ENCODE measurements at regions of chr1 and their contacts with region 1.

Region 1: GRCh38 chr1:111592389-111593361 is 26.9 kb upstream of the RAP1A start:
- DNase-seq: peak; percentile 66 to 96 (median 88)
- ATAC-seq: peak; percentile 92
- H3K4me3 ChIP-seq: no peak overlapping the region
- H3K4me3 Mint-ChIP-seq: peak overlapping the region; percentile 49
- H3K27ac ChIP-seq: peak overlapping the region; percentile 43 to 64
- H3K27ac Mint-ChIP-seq: peak overlapping the region; percentile 79
- H3K4me1 ChIP-seq: peaks cover 54% of the 10 kb centered on the region
- H3K4me1 Mint-ChIP-seq: peaks cover 59% of the 10 kb centered on the region
- H3K27me3 ChIP-seq: no peaks in the 10 kb centered on the region
- H3K27me3 Mint-ChIP-seq: no peaks in the 10 kb centered on the region
- CTCF ChIP-seq: no peak

Region 2: DNA sequence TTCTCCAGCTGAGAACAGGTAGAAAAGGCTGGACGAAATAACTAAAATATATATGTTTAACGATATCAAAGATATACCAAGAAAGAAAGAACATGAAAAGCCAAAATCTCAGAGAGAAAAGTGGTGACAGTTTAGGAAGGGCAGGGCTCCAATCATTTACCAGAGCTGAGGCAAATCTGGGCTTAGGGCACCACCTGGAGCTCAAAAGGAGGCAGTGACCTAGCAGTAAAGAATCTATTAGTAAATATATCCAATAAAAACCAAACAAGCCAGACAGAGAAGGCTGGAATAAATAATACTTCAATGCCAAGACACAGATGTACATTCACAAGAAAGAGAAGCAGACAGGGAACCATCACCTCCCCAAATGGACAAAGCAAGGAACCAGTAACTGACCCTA is 258.5 kb before region 1 on chr1:
- CTCF ChIA-PET with region 1: no interaction called
- POLR2A ChIA-PET with region 1: no interaction called
- intact Hi-C with region 1: no loop called
- DNase-seq: peak; percentile 37 to 85 (median 52)
- ATAC-seq: peak; percentile 95
- H3K4me3 ChIP-seq: no peak overlapping the region
- H3K4me3 Mint-ChIP-seq: no peak overlapping the region
- H3K27ac ChIP-seq: no peak overlapping the region
- H3K27ac Mint-ChIP-seq: no peak overlapping the region
- H3K4me1 ChIP-seq: peaks cover 8% of the 10 kb centered on the region
- H3K4me1 Mint-ChIP-seq: peaks cover 6% of the 10 kb centered on the region
- H3K27me3 ChIP-seq: no peaks in the 10 kb centered on the region
- H3K27me3 Mint-ChIP-seq: no peaks in the 10 kb centered on the region
- CTCF ChIP-seq: peak; percentile 81

Region 3: GRCh38 chr1:111516005-111516535 is 76.6 kb before region 1 on chr1:
- CTCF ChIA-PET with region 1: no interaction called
- POLR2A ChIA-PET with region 1: interaction called, 13 read pairs
- intact Hi-C with region 1: no loop called
- DNase-seq: peak in 7 of 14 experiments; percentile 20 to 76 (median 45)
- ATAC-seq: peak; percentile 84
- H3K4me3 ChIP-seq: peak overlapping the region; percentile 58
- H3K4me3 Mint-ChIP-seq: peak overlapping the region; percentile 73
- H3K27ac ChIP-seq: no peak overlapping the region
- H3K27ac Mint-ChIP-seq: peak overlapping the region; percentile 66
- H3K4me1 ChIP-seq: peaks cover 68% of the 10 kb centered on the region
- H3K4me1 Mint-ChIP-seq: peaks cover 40% of the 10 kb centered on the region
- H3K27me3 ChIP-seq: no peaks in the 10 kb centered on the region
- H3K27me3 Mint-ChIP-seq: no peaks in the 10 kb centered on the region
- CTCF ChIP-seq: peak; percentile 50

Region 4: DNA sequence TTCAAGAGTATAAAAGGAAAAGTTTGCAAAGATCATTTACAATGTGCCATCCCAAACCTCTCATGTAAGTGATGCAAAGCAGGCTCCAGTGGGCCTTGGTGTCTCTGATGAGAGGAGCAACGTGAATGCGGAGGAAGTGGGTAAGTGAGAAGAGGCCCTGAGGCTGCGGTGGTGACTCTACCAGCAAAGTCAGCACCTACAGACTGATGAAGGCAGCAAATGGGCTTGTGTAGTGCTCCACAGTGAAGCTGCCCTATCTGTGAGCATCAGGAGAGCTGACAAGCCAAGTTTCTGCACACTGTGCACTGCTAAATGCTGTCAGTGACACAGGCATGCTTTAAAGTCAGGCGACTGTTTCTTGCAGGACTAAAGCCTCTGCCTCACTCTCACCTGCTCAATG is 11.3 kb after region 1 on chr1:
- CTCF ChIA-PET with region 1: interaction called, 7 read pairs
- POLR2A ChIA-PET with region 1: interaction called, 29 read pairs
- intact Hi-C with region 1: no loop called
- DNase-seq: peak; percentile 63 to 91 (median 76)
- ATAC-seq: peak; percentile 98
- H3K4me3 ChIP-seq: no peak overlapping the region
- H3K4me3 Mint-ChIP-seq: peak overlapping the region; percentile 37
- H3K27ac ChIP-seq: peak overlapping the region; percentile 30 to 63
- H3K27ac Mint-ChIP-seq: peak overlapping the region; percentile 84
- H3K4me1 ChIP-seq: peaks cover 74% of the 10 kb centered on the region
- H3K4me1 Mint-ChIP-seq: peaks cover 76% of the 10 kb centered on the region
- H3K27me3 ChIP-seq: no peaks in the 10 kb centered on the region
- H3K27me3 Mint-ChIP-seq: no peaks in the 10 kb centered on the region
- CTCF ChIP-seq: no peak

Region 5: DNA sequence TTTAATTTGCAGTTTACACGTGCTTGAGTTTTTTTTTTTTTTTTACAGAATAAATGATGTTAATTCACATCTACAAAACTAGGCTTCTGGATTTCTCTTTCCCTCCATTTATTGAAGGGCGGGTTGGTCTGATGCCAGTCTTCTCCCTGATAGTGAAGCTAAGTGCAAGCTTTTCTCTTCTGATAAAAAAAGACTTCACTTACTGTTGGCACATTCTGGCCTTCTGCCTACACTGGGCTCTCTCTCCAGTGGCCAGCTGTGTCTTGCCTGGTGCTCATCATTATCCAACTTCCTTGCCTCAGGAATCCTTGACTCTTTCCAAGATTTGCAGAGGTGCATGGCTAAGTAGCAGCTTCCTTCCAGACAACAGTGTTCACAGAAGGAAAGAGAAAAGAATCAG is 19.3 kb after region 1 on chr1:
- CTCF ChIA-PET with region 1: interaction called, 5 read pairs
- POLR2A ChIA-PET with region 1: interaction called, 23 read pairs
- intact Hi-C with region 1: no loop called
- DNase-seq: no peak
- ATAC-seq: no peak
- H3K4me3 ChIP-seq: no peak overlapping the region
- H3K4me3 Mint-ChIP-seq: no peak overlapping the region
- H3K27ac ChIP-seq: no peak overlapping the region
- H3K27ac Mint-ChIP-seq: no peak overlapping the region
- H3K4me1 ChIP-seq: peaks cover 20% of the 10 kb centered on the region
- H3K4me1 Mint-ChIP-seq: peaks cover 29% of the 10 kb centered on the region
- H3K27me3 ChIP-seq: no peaks in the 10 kb centered on the region
- H3K27me3 Mint-ChIP-seq: no peaks in the 10 kb centered on the region
- CTCF ChIP-seq: no peak

Region 6: GRCh38 chr1:111648806-111649205 is 56.1 kb after region 1 on chr1:
- CTCF ChIA-PET with region 1: interaction called, 4 read pairs
- POLR2A ChIA-PET with region 1: no interaction called
- intact Hi-C with region 1: loop called in 1 of 2 experiments (anchors 10 kb)
- DNase-seq: no peak
- ATAC-seq: no peak
- H3K4me3 ChIP-seq: no peak overlapping the region
- H3K4me3 Mint-ChIP-seq: no peak overlapping the region
- H3K27ac ChIP-seq: no peak overlapping the region
- H3K27ac Mint-ChIP-seq: peak overlapping the region; percentile 79
- H3K4me1 ChIP-seq: peaks cover 60% of the 10 kb centered on the region
- H3K4me1 Mint-ChIP-seq: peaks cover 95% of the 10 kb centered on the region
- H3K27me3 ChIP-seq: no peaks in the 10 kb centered on the region
- H3K27me3 Mint-ChIP-seq: no peaks in the 10 kb centered on the region
- CTCF ChIP-seq: no peak

Measured in CD4-positive, alpha-beta T cell (primary cell).